Activated naive CD4-positive, alpha-beta T cell treated with anti-CD3 and anti-CD28 coated beads for 36 hours (primary cell): ENCODE measurements at regions of chr7 and their contacts with region 1.

Region 1: GRCh38 chr7:120857588-120858573 is at the start of gene TSPAN12:
- DNase-seq: peak; percentile 59
- H3K4me3 Mint-ChIP-seq: peak within 1 kb of the TSS; percentile 79
- H3K27ac Mint-ChIP-seq: no peak within 1 kb of the TSS
- H3K4me1 Mint-ChIP-seq: peaks cover 11% of the 10 kb centered on the region
- H3K27me3 Mint-ChIP-seq: peaks cover 56% of the 10 kb centered on the region
- total RNA-seq, gene TSPAN12: not detected

Region 2: GRCh38 chr7:120792091-120792860 is 65.6 kb before region 1 on chr7:
- CTCF ChIA-PET with region 1: interaction called, 3 read pairs
- intact Hi-C with region 1: loop called (anchors 5 kb)
- DNase-seq: peak; percentile 72
- H3K4me3 Mint-ChIP-seq: no peak overlapping the region
- H3K27ac Mint-ChIP-seq: no peak overlapping the region
- H3K4me1 Mint-ChIP-seq: no peaks in the 10 kb centered on the region
- H3K27me3 Mint-ChIP-seq: no peaks in the 10 kb centered on the region

Region 3: DNA sequence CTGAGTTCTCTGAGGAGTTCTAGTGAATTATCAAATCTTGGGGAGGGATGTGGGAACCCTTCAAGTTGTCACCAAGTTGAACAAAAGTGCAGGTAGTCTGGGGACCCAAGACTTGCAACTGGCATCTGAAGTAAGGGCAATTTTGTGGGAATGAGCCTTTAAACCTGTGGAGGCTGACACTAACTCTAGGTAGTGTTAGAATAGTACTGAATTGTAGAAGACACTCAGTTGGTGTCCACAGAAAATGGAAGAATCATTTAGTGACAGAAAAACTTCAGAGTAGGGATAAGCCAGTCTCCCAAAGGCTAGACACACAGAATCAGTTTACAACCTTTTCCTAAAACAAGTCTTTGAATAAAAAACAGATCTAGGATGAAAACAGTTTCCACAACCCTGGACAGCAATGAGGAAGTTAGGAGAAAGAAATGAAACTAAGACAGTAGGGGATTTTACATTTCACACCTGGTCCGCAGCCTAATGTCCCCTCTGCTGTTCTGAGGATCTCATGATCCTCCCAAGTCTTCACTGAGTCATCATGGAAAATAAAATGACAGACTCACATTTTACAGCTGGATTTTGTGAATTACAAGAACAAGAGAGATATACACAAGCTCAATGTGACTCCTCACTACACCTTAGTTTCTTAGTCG is 69.7 kb after region 1 on chr7:
- CTCF ChIA-PET with region 1: no interaction called
- intact Hi-C with region 1: no loop called
- DNase-seq: no peak
- H3K4me3 Mint-ChIP-seq: no peak overlapping the region
- H3K27ac Mint-ChIP-seq: no peak overlapping the region
- H3K4me1 Mint-ChIP-seq: no peaks in the 10 kb centered on the region
- H3K27me3 Mint-ChIP-seq: peaks cover 2% of the 10 kb centered on the region

Region 4: DNA sequence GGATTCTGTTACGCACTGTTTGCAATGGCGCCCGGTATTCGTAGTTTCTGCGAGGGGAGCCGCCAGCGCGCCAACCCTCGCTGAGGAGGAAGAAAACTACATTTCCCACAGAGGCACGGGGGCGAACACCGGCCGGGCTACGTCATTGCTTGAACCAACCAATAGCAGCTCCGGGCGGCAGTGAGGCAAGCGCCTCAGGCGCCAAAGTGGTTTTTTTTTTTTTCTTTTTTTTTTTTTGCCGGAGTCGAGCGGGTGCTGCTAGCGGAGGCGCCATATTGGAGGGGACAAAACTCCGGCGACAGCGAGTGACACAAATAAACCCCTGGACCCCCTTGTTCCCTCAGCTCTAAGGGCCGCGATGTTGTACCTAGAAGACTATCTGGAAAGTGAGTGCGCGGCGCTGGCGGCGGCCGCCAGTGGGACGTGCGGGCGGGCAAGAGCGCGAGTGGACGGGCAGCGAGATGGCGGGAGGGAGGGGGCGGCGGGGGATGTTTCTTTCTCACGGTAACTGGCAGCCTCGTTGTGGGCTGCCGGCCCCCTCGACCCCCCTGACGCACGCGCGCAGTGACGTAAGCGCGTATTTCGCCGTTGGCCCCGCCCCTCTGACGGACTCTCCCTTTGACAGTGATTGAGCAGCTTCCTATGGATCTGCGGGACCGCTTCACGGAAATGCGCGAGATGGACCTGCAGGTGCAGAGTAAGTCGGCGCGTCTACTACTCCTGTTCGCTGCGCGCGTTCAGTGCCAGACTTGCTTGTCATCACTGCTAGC is 92.8 kb after region 1 on chr7 and contains the start of gene ING3:
- CTCF ChIA-PET with region 1: no interaction called
- intact Hi-C with region 1: loop called (anchors 1 kb)
- DNase-seq: peak; percentile 97
- H3K4me3 Mint-ChIP-seq: peak within 1 kb of the TSS; percentile 97
- H3K27ac Mint-ChIP-seq: peak within 1 kb of the TSS; percentile 97
- H3K4me1 Mint-ChIP-seq: peaks cover 17% of the 10 kb centered on the region
- H3K27me3 Mint-ChIP-seq: peaks cover 3% of the 10 kb centered on the region
- total RNA-seq, gene ING3: 25.0 to 26.7 TPM

Region 5: DNA sequence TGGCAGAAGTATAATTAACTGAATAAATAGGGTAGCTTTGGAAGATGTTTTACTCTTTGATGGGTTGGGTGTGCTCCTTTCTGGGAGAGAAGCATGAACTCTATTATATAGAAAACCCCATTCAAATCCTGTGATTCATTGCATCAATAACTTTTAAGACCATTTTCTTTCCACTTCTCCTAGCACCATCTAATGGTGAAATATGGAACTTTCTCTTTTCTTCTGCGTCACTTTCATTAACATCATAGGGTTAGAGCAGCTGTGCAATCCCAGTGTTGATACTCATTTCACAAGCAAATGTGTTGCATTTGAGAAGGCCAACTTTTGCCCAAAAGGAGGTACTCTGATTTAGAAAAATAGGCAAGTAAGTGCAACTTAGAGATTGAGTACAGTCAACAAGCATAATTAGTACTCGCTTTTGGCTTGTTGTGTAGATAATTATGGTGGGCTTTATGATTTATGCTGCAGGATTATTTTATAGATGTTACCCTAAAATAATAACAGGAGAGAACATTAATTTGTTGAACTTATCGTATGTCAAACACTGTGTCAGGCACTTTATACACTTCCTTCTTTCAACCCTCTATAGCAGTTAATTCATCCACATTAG is 223.6 kb after region 1 on chr7:
- CTCF ChIA-PET with region 1: no interaction called
- intact Hi-C with region 1: loop called (anchors 5 kb)
- DNase-seq: no peak
- H3K4me3 Mint-ChIP-seq: no peak overlapping the region
- H3K27ac Mint-ChIP-seq: no peak overlapping the region
- H3K4me1 Mint-ChIP-seq: no peaks in the 10 kb centered on the region
- H3K27me3 Mint-ChIP-seq: peaks cover 6% of the 10 kb centered on the region

Region 6: DNA sequence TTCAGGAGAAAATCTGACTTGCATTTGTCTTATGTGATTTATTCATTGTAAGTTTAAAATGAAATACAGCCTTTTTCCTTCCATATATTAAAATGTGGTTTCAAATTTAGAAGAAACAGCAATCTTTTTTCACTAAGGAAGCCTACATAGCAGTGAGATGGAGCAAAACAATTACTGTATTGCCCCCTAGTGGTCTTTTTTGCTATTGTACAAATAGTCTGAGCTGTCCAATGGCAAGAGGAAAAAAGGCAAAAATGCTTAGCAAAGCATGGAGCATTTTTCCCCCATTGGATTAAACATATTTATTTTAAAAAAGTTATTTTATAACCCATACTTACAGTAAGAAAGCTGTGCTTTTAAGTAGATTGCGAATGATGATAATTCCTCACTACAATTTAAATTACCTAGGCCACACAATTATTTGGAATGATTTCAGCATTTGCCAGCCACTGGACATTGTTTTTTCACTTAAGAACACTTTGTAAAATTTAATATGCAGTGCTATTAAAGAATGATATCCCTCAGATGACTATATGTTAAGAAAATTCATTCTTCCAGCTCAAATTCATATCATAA is 250.1 kb after region 1 on chr7:
- CTCF ChIA-PET with region 1: no interaction called
- intact Hi-C with region 1: loop called (anchors 2 kb)
- DNase-seq: no peak
- H3K4me3 Mint-ChIP-seq: no peak overlapping the region
- H3K27ac Mint-ChIP-seq: no peak overlapping the region
- H3K4me1 Mint-ChIP-seq: no peaks in the 10 kb centered on the region
- H3K27me3 Mint-ChIP-seq: peaks cover 11% of the 10 kb centered on the region

Region 7: DNA sequence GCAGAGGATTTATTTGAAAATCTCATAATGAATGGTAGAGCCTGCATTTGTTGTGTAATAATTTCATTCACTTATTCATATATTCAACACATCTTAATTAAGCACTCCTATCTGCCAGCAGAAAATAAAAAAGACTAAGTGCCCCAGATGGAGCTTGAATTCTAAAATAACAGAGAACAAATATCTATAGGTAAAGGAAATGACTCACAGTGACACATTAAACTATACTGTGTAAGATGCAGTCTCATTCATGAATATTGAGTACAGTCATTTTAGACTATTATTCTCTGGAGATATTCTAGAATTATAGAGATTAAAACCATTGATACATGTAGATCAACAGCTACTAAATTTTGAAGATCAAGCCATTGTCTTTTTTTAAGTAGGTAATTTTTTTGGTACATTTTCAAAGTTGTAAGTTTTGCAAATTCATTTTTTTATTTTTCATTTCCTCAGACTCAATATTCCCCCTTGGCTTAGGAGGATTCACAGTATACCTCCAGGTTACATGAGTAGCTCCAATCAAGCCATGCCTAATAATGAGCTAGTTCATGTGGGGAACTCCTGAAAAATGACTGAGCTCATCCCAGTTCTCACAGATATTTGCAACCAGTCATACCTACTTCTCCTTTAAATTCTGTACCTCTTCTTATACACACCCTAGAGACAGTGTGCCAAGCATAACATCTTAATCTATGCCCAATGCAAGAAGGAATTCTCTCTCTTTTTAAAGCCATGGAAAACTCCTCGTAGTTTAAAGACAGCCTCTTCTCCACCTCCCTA is 1087.4 kb after region 1 on chr7:
- CTCF ChIA-PET with region 1: no interaction called
- intact Hi-C with region 1: no loop called
- DNase-seq: no peak
- H3K4me3 Mint-ChIP-seq: no peak overlapping the region
- H3K27ac Mint-ChIP-seq: no peak overlapping the region
- H3K4me1 Mint-ChIP-seq: no peaks in the 10 kb centered on the region
- H3K27me3 Mint-ChIP-seq: no peaks in the 10 kb centered on the region